Dorsolateral prefrontal cortex (tissue), 120 donors: ENCODE measurements at regions of chr15 and their contacts with region 1.

Region 1: GRCh38 chr15:85044251-85044853 is 62.7 kb downstream of the PDE8A start:
- DNase-seq: peak in 9 of 10 donors; percentile 35 to 89 (median 72)
- H3K4me3 ChIP-seq: no peak overlapping the region
- H3K27ac ChIP-seq: peak overlapping the region; percentile 10 to 95 (median 87)
- H3K27me3 ChIP-seq: no peaks in the 10 kb centered on the region
- CTCF ChIP-seq: peak in 55 of 56 donors; percentile 42 to 90 (median 77)

Region 2: GRCh38 chr15:84955089-84955848 is 89.1 kb before region 1 on chr15:
- intact Hi-C with region 1: loop called (anchors 2 to 10 kb)
- DNase-seq: peak; percentile 18 to 88 (median 82)
- H3K4me3 ChIP-seq: peak overlapping the region in 58 of 59 donors; percentile 12 to 69 (median 44)
- H3K27ac ChIP-seq: peak overlapping the region in 54 of 59 donors; percentile 8 to 91 (median 68)
- H3K27me3 ChIP-seq: no peaks in the 10 kb centered on the region
- CTCF ChIP-seq: peak; percentile 57 to 93 (median 87)

Region 3: GRCh38 chr15:85094685-85095084 is 50.3 kb after region 1 on chr15:
- intact Hi-C with region 1: loop called in 1 of 2 experiments (anchors 5 kb)
- DNase-seq: no peak
- H3K4me3 ChIP-seq: no peak overlapping the region
- H3K27ac ChIP-seq: peak overlapping the region in 54 of 59 donors; percentile 9 to 100 (median 83)
- H3K27me3 ChIP-seq: no peaks in the 10 kb centered on the region
- CTCF ChIP-seq: no peak

Region 4: DNA sequence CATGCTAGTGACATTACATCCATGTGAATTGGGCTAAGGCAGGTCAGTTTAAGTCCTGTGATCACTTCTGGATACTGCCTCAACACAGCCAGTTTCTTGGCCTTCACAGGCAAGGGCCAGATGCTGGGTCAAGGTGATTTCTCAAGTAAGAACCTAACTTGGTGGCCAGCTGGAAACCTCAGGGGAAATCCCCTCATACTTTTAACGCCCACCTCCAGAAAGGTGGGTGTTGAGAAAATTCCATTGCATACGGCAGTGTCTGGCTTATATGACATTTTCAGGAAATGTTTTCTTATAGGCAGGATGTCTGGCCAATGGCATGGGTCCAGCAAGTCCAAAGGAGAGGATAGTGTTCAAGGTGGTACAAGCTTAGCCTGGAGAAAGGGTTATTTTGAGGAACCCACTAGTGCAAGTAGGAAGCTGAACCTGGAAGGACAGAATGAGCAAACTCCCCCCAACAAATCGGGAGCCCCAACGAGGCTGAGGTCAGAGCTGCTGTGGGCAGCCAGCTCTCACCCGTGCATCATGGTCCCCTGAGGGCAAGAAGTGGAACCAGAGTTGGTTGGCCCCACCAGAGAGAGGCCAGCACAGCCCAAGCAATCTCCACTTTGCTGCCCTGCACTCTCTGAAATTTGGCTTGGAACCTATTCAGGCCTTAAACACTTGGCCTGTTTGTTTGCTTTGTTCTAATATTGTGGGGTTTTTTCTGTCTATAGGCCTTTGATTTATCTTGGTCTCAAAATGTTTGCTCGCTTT is 72.8 kb after region 1 on chr15:
- intact Hi-C with region 1: loop called in 1 of 2 experiments (anchors 5 kb)
- DNase-seq: no peak
- H3K4me3 ChIP-seq: no peak overlapping the region
- H3K27ac ChIP-seq: peak overlapping the region in 58 of 59 donors; percentile 6 to 100 (median 96)
- H3K27me3 ChIP-seq: no peaks in the 10 kb centered on the region
- CTCF ChIP-seq: no peak